CD8-positive, alpha-beta T cell (primary cell): ENCODE measurements at regions of chr22 and their contacts with region 1.

Region 1: DNA sequence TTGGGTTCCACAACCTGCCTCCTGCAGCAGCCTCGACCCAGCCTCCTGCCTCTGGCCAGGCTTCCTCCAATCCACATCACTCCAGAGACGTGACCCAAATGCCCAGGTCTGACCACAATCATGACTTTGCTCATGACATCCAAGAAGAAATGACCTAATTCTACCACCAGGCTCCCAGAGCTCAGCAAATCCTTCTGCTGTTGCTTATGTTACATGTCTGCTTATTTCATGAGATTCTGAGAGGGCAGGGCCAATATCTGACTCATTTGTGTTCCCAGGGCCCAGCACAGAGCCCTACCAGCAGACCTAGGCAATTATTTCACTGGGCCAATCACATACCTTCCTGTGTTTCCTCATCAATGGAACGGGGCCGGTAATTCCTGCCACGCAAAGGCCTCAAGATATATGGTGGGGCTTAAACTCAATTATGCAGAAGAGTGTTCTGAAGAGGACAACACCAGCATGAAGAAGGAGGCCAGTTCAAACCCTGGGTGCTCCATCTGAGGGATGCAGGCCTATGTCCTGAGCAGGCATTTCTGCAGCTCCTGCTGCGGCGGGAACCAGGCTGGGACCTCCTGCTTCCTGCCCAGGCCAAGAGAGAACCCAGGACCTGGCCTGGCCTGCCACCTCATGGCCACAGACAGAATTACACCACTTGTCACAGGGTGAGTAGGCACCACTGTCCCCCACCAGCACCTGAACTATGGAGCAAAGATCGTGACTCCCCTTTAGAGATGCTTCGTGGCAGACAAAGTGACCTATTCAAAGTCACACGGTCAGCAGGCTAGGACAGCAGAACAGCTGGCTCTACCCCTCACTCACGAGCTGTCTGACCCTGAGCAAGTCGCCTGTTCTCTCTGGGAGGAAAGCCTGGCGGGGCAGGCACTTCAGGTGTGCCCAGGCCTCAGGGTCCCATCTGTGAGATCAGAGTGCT is 5.9 kb downstream of the CENPM start:
- DNase-seq: peak; percentile 76 to 93 (median 86)
- ATAC-seq: peak; percentile 65
- H3K4me3 ChIP-seq: peak overlapping the region in 1 of 2 experiments; percentile 15
- H3K4me3 Mint-ChIP-seq: peak overlapping the region; percentile 36
- H3K27ac ChIP-seq: peak overlapping the region; percentile 83 to 96
- H3K27ac Mint-ChIP-seq: peak overlapping the region; percentile 98
- H3K4me1 ChIP-seq: peaks cover 29% of the 10 kb centered on the region
- H3K4me1 Mint-ChIP-seq: peaks cover 35% of the 10 kb centered on the region
- H3K27me3 ChIP-seq: no peaks in the 10 kb centered on the region
- H3K27me3 Mint-ChIP-seq: no peaks in the 10 kb centered on the region
- CTCF ChIP-seq: peak; percentile 98

Region 2: DNA sequence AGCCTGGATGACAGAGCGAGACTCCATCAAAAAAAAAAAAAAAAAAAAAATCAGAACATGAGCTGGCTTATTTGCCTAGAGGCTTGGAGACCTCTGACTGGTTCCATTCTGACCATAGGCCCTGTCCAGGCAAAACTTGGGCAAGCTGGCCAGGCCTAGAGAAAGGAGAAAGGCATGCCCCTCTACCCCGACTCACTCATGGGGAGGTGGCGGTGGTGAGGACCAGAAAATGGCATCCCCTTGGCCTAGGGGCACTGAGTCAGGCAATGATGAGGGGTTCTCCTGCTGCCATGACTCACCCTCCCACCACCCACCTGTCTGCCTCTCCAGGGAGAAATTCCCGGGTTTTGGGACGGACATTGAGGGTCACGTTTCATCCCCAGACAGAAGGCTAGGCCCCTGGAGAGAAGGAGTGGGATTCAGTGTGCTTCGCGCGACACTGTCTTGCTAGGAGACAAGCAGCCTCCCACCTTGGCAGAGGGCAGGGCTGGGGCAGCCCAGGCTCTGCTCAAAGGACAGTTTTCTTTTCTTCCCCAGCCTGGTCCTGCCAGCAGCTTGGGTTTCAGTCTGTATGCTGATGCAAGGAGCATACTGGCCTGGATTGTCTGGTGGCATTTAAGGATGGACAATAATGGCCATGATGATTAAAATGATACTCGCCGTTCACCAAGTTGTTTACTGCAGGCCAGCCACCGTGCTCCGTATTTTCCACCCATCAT is 511.7 kb before region 1 on chr22:
- CTCF ChIA-PET with region 1: no interaction called
- POLR2A ChIA-PET with region 1: no interaction called
- intact Hi-C with region 1: no loop called
- DNase-seq: no peak
- ATAC-seq: no peak
- H3K4me3 ChIP-seq: no peak overlapping the region
- H3K4me3 Mint-ChIP-seq: no peak overlapping the region
- H3K27ac ChIP-seq: no peak overlapping the region
- H3K27ac Mint-ChIP-seq: no peak overlapping the region
- H3K4me1 ChIP-seq: peaks cover 15% of the 10 kb centered on the region
- H3K4me1 Mint-ChIP-seq: peaks cover 17% of the 10 kb centered on the region
- H3K27me3 ChIP-seq: no peaks in the 10 kb centered on the region
- H3K27me3 Mint-ChIP-seq: no peaks in the 10 kb centered on the region
- CTCF ChIP-seq: no peak

Region 3: DNA sequence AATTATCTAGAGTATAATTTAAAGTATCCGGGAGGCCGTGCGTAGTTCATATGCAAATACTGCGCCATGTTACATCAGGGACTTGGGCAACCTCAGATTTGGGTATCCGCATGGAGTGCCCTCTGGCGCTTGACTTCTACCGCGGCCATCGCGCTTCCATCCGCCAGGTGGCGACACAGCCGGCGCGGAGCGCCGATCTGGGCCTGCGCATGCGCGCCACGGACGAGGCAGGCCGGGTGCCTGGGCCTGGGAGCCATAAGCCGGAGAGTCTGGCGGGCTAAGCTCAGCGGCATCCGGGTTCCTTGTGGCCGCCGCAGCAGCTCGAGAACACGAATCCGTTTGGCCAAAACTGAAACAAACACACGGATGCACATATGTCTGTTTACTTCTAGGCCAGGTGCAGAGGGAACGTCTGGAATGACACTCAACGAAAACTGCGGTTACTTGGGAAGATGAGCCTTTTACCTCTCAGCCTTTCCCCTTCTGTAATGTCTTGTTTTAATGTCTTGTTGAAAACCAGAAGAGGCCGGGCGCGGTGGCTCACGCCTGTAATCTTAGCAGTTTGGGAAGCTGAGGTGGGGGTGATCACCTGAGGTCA is 274.3 kb before region 1 on chr22:
- CTCF ChIA-PET with region 1: interaction called, 16 read pairs
- POLR2A ChIA-PET with region 1: interaction called, 8 read pairs
- intact Hi-C with region 1: loop called (anchors 1 kb)
- DNase-seq: peak; percentile 89 to 97 (median 92)
- ATAC-seq: peak; percentile 94
- H3K4me3 ChIP-seq: peak overlapping the region; percentile 30 to 46
- H3K4me3 Mint-ChIP-seq: peak overlapping the region; percentile 84
- H3K27ac ChIP-seq: peak overlapping the region; percentile 57 to 85
- H3K27ac Mint-ChIP-seq: peak overlapping the region; percentile 96
- H3K4me1 ChIP-seq: peaks cover 9% of the 10 kb centered on the region
- H3K4me1 Mint-ChIP-seq: peaks cover 7% of the 10 kb centered on the region
- H3K27me3 ChIP-seq: no peaks in the 10 kb centered on the region
- H3K27me3 Mint-ChIP-seq: no peaks in the 10 kb centered on the region
- CTCF ChIP-seq: peak; percentile 94

Region 4: GRCh38 chr22:41780746-41781505 is 160.2 kb before region 1 on chr22:
- CTCF ChIA-PET with region 1: interaction called, 11 read pairs
- POLR2A ChIA-PET with region 1: interaction called, 10 read pairs
- intact Hi-C with region 1: loop called in 1 of 2 experiments (anchors 1 kb)
- DNase-seq: peak; percentile 77 to 99 (median 90)
- ATAC-seq: peak; percentile 92
- H3K4me3 ChIP-seq: peak overlapping the region; percentile 64 to 69
- H3K4me3 Mint-ChIP-seq: peak overlapping the region; percentile 89
- H3K27ac ChIP-seq: peak overlapping the region; percentile 86
- H3K27ac Mint-ChIP-seq: peak overlapping the region; percentile 99
- H3K4me1 ChIP-seq: peaks cover 32% of the 10 kb centered on the region
- H3K4me1 Mint-ChIP-seq: peaks cover 57% of the 10 kb centered on the region
- H3K27me3 ChIP-seq: no peaks in the 10 kb centered on the region
- H3K27me3 Mint-ChIP-seq: no peaks in the 10 kb centered on the region
- CTCF ChIP-seq: no peak

Region 5: DNA sequence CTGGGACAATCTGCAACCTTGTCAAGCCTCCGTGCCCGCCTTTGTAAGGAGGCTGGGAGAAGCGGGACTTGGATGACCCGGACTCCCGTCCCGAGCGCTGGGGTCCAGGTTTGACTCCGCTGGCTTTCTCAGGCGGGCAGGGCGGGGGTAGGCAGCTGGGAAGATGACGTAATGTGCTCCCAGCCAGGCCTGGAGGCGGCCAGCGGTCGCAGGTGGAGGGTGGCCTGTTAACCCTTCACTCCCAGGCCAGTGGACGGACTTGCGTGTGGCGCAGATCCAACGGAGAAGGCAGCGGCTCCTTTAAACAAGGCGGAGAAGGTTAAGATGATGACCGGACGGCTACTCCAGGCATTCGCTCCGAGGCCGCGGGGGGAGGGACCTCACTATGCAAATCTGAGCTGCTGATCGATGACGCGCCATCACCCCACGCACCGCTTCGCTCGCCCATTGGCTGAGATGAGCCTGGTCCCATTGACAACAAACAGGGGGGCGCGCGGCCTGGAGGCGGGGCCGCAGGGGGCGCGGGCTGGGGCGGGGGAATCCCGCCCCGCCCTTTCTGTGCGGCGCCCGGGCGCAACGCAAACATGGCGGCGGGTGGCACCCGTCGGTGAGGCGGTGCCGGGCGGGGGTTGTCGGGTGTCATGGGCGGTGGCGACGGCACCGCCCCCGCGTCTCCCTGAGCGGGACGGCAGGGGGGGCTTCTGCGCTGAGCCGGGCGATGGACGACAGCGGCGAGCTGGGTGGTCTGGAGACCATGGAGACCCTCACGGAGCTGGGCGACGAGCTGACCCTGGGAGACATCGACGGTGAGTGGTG is 108.3 kb before region 1 on chr22 and contains the start of gene SREBF2:
- CTCF ChIA-PET with region 1: interaction called, 16 read pairs
- POLR2A ChIA-PET with region 1: interaction called, 48 read pairs
- intact Hi-C with region 1: loop called (anchors 1 kb)
- DNase-seq: peak; percentile 97 to 100 (median 99)
- ATAC-seq: peak; percentile 94
- H3K4me3 ChIP-seq: peak within 1 kb of the TSS; percentile 76 to 84
- H3K4me3 Mint-ChIP-seq: peak within 1 kb of the TSS; percentile 97
- H3K27ac ChIP-seq: peak within 1 kb of the TSS; percentile 85 to 97
- H3K27ac Mint-ChIP-seq: peak within 1 kb of the TSS; percentile 100
- H3K4me1 ChIP-seq: peaks cover 15% of the 10 kb centered on the region
- H3K4me1 Mint-ChIP-seq: peaks cover 31% of the 10 kb centered on the region
- H3K27me3 ChIP-seq: no peaks in the 10 kb centered on the region
- H3K27me3 Mint-ChIP-seq: no peaks in the 10 kb centered on the region
- CTCF ChIP-seq: no peak
- total RNA-seq, gene SREBF2: 109 to 122 TPM

Region 6: DNA sequence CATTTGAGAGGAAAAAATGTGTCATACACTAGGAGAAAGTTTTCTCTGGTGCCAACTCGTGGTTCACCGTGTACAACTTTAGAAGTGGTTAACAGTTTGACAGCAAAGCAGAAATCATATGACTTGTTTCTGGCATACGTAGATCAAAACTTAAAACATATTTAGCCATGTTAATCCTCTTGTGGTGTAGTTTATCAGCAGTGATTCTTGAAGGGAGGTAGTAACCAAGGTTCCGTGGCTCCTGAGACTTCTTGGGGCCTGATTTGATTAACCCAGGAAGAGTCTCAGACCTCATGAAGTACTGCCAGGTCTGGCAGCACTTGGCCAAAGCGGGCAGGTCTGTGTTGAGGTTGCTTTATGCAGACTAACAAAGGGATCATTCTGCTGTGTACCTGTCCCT is 67.7 kb before region 1 on chr22:
- CTCF ChIA-PET with region 1: interaction called, 4 read pairs
- POLR2A ChIA-PET with region 1: no interaction called
- intact Hi-C with region 1: loop called in 1 of 2 experiments (anchors 1 kb)
- DNase-seq: peak in 4 of 9 experiments; percentile 33 to 84 (median 67)
- ATAC-seq: peak; percentile 88
- H3K4me3 ChIP-seq: no peak overlapping the region
- H3K4me3 Mint-ChIP-seq: no peak overlapping the region
- H3K27ac ChIP-seq: peak overlapping the region; percentile 38 to 62
- H3K27ac Mint-ChIP-seq: peak overlapping the region; percentile 94
- H3K4me1 ChIP-seq: peaks cover 19% of the 10 kb centered on the region
- H3K4me1 Mint-ChIP-seq: peaks cover 28% of the 10 kb centered on the region
- H3K27me3 ChIP-seq: no peaks in the 10 kb centered on the region
- H3K27me3 Mint-ChIP-seq: no peaks in the 10 kb centered on the region
- CTCF ChIP-seq: no peak

Region 7: DNA sequence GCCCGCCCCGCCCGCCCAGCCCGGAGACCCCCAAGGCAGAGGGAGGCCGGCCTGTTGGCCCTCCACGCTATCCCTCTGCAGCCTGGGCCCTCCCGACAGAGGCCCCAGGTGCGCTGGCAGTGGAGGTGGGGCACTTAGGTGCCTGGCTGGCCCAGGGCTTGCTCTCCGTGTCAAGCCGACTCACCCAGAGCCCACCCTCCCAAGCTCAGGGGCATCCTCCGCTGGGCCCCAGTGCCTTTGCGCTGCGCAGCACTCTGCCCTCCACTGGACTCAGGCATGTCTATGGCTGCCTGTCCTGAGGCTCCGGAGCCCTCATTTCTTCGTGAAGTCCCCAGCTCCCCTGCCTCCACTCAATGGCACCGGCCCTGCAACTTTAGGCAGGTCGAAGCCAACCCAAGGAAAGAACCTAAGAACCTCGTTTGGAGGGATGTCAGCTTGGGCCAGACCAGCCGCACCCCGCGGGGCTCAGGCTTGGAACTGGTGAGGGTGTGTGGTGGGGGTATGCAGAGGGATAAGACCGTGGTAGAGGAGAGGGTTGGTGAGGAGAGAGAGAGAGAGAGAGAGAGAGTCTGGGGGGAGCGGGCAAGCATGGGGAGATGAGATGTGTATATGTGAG is 16.9 kb after region 1 on chr22:
- CTCF ChIA-PET with region 1: interaction called, 16 read pairs
- POLR2A ChIA-PET with region 1: no interaction called
- intact Hi-C with region 1: no loop called
- DNase-seq: peak in 1 of 9 experiments; percentile 32
- ATAC-seq: peak; percentile 35
- H3K4me3 ChIP-seq: no peak overlapping the region
- H3K4me3 Mint-ChIP-seq: peak overlapping the region; percentile 11
- H3K27ac ChIP-seq: no peak overlapping the region
- H3K27ac Mint-ChIP-seq: no peak overlapping the region
- H3K4me1 ChIP-seq: no peaks in the 10 kb centered on the region
- H3K4me1 Mint-ChIP-seq: peaks cover 3% of the 10 kb centered on the region
- H3K27me3 ChIP-seq: peaks cover 0 to 6% of the 10 kb centered on the region in 2 experiments
- H3K27me3 Mint-ChIP-seq: no peaks in the 10 kb centered on the region
- CTCF ChIP-seq: peak; percentile 53

Region 8: GRCh38 chr22:42604403-42604802 is 663.3 kb after region 1 on chr22:
- CTCF ChIA-PET with region 1: no interaction called
- POLR2A ChIA-PET with region 1: no interaction called
- intact Hi-C with region 1: no loop called
- DNase-seq: no peak
- ATAC-seq: no peak
- H3K4me3 ChIP-seq: no peak overlapping the region
- H3K4me3 Mint-ChIP-seq: no peak overlapping the region
- H3K27ac ChIP-seq: no peak overlapping the region
- H3K27ac Mint-ChIP-seq: no peak overlapping the region
- H3K4me1 ChIP-seq: peaks cover 15% of the 10 kb centered on the region
- H3K4me1 Mint-ChIP-seq: peaks cover 46% of the 10 kb centered on the region
- H3K27me3 ChIP-seq: no peaks in the 10 kb centered on the region
- H3K27me3 Mint-ChIP-seq: no peaks in the 10 kb centered on the region
- CTCF ChIP-seq: no peak